Dendritic cell treated with granulocyte-macrophage colony-stimulating factor and Interleukin-4, amounts not matched to agents 40 ng/mL and 50 ng/mL, for 4 days (primary cell): ENCODE measurements at regions of chr20 and their contacts with region 1.

Region 1: DNA sequence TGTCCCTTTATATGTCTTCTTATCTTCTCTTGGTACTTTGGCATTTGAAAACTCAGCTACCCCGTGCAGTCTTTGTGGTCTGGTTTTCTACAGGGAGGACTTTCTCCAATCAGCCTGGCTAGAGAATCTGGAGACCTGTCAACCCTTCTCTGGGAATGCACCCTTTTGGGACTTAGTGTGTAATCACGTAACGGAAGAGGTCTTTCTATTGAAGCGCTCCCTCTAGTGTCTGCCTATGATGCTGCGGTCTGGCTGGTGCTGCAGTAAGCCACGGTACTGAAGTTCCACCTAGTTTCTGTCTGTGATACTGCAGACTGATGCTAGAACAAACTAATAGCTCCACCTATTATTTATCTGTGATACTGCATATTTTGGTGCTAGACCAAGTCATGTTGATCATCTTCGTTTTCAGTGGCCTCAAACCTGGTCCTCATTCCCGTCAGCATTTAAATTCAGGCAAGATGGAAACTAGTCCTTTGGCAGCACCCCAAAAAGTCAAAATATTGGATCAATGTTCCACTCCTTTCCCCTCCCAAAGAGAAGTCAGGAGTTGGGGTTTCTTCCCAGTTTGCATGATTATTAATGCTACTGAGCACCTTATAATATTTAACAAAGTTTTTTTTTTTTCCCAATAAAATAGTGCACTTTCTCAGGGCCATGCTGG is 12.5 kb upstream of the SIRPB2 start:
- H3K4me3 Mint-ChIP-seq: no peak overlapping the region
- H3K27ac Mint-ChIP-seq: peak overlapping the region; percentile 53
- H3K4me1 Mint-ChIP-seq: peaks cover 16% of the 10 kb centered on the region
- H3K27me3 Mint-ChIP-seq: no peaks in the 10 kb centered on the region

Region 2: GRCh38 chr20:1313236-1313964 is 190.3 kb before region 1 on chr20:
- intact Hi-C with region 1: loop called (anchors 5 kb)
- H3K4me3 Mint-ChIP-seq: no peak overlapping the region
- H3K27ac Mint-ChIP-seq: no peak overlapping the region
- H3K4me1 Mint-ChIP-seq: peaks cover 12% of the 10 kb centered on the region
- H3K27me3 Mint-ChIP-seq: peaks cover 8% of the 10 kb centered on the region

Region 3: DNA sequence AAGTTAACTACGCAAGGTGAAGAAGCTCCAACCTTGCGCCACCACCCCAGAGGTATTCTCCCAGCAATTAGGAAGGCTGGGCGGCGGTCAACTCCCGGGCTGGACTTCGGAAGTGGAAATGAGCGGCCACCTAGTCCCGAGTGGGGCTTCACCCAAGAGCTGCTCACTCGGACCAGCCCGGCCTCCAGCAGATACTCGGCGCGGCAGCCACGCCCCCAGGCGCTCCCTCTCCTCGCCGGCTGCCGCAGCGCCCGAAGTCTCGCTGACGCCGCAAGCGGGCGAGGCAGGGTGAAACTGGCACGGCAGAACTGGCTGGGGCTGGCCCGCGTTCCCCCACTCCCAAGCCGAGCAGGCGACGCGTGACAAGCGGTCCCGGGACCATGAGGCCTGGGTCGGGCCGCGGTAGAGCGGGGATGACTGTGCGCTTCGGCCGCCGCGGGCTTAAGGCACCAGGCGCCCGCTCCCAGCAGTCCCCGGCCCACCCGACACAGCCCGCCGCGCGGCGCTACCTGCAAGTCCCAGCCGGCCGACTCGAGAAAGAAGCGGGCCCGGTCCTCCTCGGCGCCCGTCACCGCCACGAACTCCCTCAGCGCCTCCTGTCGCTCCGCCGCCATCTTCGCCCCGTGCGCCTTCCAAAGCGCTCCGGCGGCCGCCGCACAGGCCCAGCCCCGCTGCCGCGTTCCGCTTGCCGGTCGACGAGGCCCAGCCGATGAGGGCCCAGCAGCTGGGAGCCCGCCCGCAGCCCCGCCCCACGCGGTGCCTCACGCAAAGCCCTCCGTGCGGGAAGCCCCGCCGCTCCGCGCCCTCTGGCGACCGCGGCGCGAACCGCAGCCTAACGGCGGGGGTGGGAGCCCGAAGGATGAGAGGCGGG is 37.2 kb before region 1 on chr20 and contains the start of gene NSFL1C:
- intact Hi-C with region 1: loop called (anchors 1 kb)
- H3K4me3 Mint-ChIP-seq: peak within 1 kb of the TSS; percentile 91
- H3K27ac Mint-ChIP-seq: peak within 1 kb of the TSS; percentile 98
- H3K4me1 Mint-ChIP-seq: peaks cover 75% of the 10 kb centered on the region
- H3K27me3 Mint-ChIP-seq: no peaks in the 10 kb centered on the region

Region 4: GRCh38 chr20:1491281-1491840 is 12.3 kb before region 1 on chr20 and contains the start of gene SIRPB2:
- intact Hi-C with region 1: loop called (anchors 1 kb)
- H3K4me3 Mint-ChIP-seq: peak within 1 kb of the TSS; percentile 88
- H3K27ac Mint-ChIP-seq: peak within 1 kb of the TSS; percentile 98
- H3K4me1 Mint-ChIP-seq: peaks cover 79% of the 10 kb centered on the region
- H3K27me3 Mint-ChIP-seq: no peaks in the 10 kb centered on the region